H1 (cell line): ENCODE measurements at regions of chr1 and their contacts with region 1.

Region 1: GRCh38 chr1:153990468-153991150 is at the start of gene RPS27:
- DNase-seq: peak; percentile 86 to 93
- H3K4me3 ChIP-seq: peak within 1 kb of the TSS; percentile 78 to 95 (median 87)
- H3K27ac ChIP-seq: peak within 1 kb of the TSS; percentile 95
- H3K4me1 ChIP-seq: peaks cover 0 to 8% (median 3%) of the 10 kb centered on the region in 4 experiments; a peak in 4 of 7 replicates
- H3K27me3 ChIP-seq: no peaks in the 10 kb centered on the region
- CTCF ChIP-seq: no peak
- EP300 ChIP-seq: no peak
- POLR2A ChIP-seq: peak; percentile 100
- RAD21 ChIP-seq: no peak
- total RNA-seq, gene RPS27: 1,810 and 1,941 TPM in 2 replicates

Region 2: GRCh38 chr1:153643100-153643499 is 347.5 kb before region 1 on chr1:
- CTCF ChIA-PET with region 1: no interaction called
- POLR2A ChIA-PET with region 1: no interaction called
- DNase-seq: no peak
- H3K4me3 ChIP-seq: no peak overlapping the region
- H3K27ac ChIP-seq: no peak overlapping the region
- H3K4me1 ChIP-seq: peaks cover 0 to 3% (median 0%) of the 10 kb centered on the region in 4 experiments; a peak in 1 of 7 replicates
- H3K27me3 ChIP-seq: no peaks in the 10 kb centered on the region
- CTCF ChIP-seq: no peak
- EP300 ChIP-seq: no peak
- POLR2A ChIP-seq: no peak
- RAD21 ChIP-seq: no peak

Region 3: GRCh38 chr1:153775458-153776327 is 214.9 kb before region 1 on chr1:
- CTCF ChIA-PET with region 1: interaction called, 5 read pairs
- POLR2A ChIA-PET with region 1: interaction called, 53 read pairs
- DNase-seq: peak; percentile 70 to 92
- H3K4me3 ChIP-seq: peak overlapping the region; percentile 66 to 86 (median 83)
- H3K27ac ChIP-seq: peak overlapping the region; percentile 82
- H3K4me1 ChIP-seq: peaks cover 0 to 17% (median 11%) of the 10 kb centered on the region in 4 experiments; a peak in 6 of 7 replicates
- H3K27me3 ChIP-seq: no peaks in the 10 kb centered on the region; a peak in 1 of 7 replicates
- CTCF ChIP-seq: no peak; a peak in 1 of 4 replicates
- EP300 ChIP-seq: 0 out of 3 replicates have a peak, but pooled peaks of 1 of the 2 experiments have one; percentile 51
- POLR2A ChIP-seq: peak; percentile 70 to 93
- RAD21 ChIP-seq: peak in 1 of 2 experiments; percentile 2; a peak in 1 of 4 replicates

Region 4: GRCh38 chr1:153816283-153816889 is 174.2 kb before region 1 on chr1:
- CTCF ChIA-PET with region 1: interaction called, 6 read pairs
- POLR2A ChIA-PET with region 1: interaction called, 14 read pairs
- DNase-seq: no peak
- H3K4me3 ChIP-seq: no peak overlapping the region
- H3K27ac ChIP-seq: no peak overlapping the region
- H3K4me1 ChIP-seq: no peaks in the 10 kb centered on the region
- H3K27me3 ChIP-seq: no peaks in the 10 kb centered on the region
- CTCF ChIP-seq: no peak
- EP300 ChIP-seq: no peak
- POLR2A ChIP-seq: no peak
- RAD21 ChIP-seq: no peak

Region 5: GRCh38 chr1:153946622-153947241 is 43.9 kb before region 1 on chr1 and contains the start of gene DENND4B:
- CTCF ChIA-PET with region 1: interaction called, 10 read pairs
- POLR2A ChIA-PET with region 1: interaction called, 70 read pairs
- DNase-seq: peak in 1 of 2 experiments; percentile 93
- H3K4me3 ChIP-seq: peak within 1 kb of the TSS; percentile 79 to 87 (median 80)
- H3K27ac ChIP-seq: peak within 1 kb of the TSS; percentile 55; the same call in 1 of the 2 replicates
- H3K4me1 ChIP-seq: peaks cover 0 to 5% (median 2%) of the 10 kb centered on the region in 4 experiments; a peak in 2 of 7 replicates
- H3K27me3 ChIP-seq: no peaks in the 10 kb centered on the region
- CTCF ChIP-seq: peak; percentile 90 to 94 (median 91)
- EP300 ChIP-seq: peak in 1 of 2 experiments; percentile 50; a peak in 1 of 3 replicates
- POLR2A ChIP-seq: no peak
- RAD21 ChIP-seq: peak; percentile 61 to 71
- total RNA-seq, gene DENND4B: 61.1 and 62.8 TPM in 2 replicates

Region 6: GRCh38 chr1:154006136-154006535 is 15.5 kb after region 1 on chr1:
- CTCF ChIA-PET with region 1: interaction called, 3 read pairs
- POLR2A ChIA-PET with region 1: interaction called, 137 read pairs
- DNase-seq: no peak
- H3K4me3 ChIP-seq: no peak overlapping the region
- H3K27ac ChIP-seq: no peak overlapping the region
- H3K4me1 ChIP-seq: no peaks in the 10 kb centered on the region
- H3K27me3 ChIP-seq: no peaks in the 10 kb centered on the region
- CTCF ChIP-seq: no peak
- EP300 ChIP-seq: no peak
- POLR2A ChIP-seq: no peak
- RAD21 ChIP-seq: no peak

Region 7: DNA sequence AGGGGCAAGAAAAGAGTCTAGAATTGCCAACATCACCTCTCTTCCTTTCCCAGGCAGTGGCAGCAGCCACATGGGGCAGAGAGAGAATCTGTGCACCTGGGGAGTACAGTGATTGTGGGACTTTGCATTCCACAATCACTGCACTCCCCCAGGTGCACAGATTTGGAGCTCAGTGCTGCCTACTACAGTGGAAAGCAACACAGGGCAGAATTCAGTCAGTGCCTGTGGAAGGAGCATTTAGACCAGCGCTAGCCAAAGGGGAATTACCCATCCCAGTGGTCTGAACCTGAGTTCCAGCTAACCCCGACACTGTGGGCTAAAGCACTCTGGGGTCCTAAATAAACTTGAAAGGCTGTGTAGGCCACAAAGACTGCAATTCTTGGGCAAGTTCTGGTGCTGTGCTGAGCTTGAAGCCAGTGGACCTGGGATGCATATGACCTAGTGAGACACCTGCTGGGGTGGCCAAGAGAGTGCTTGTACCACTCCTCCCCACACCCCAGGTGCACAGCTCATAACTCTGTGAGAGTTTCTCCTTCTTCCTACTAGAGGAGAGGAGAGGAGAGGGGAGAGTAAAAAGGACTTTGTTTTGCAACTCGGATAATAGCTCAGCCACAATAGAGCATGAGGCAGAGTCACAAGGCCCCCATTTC is 113.9 kb after region 1 on chr1:
- CTCF ChIA-PET with region 1: no interaction called
- POLR2A ChIA-PET with region 1: interaction called, 13 read pairs
- DNase-seq: peak in 1 of 2 experiments; percentile 49
- H3K4me3 ChIP-seq: no peak overlapping the region
- H3K27ac ChIP-seq: no peak overlapping the region
- H3K4me1 ChIP-seq: peaks cover 0 to 1% (median 0%) of the 10 kb centered on the region in 4 experiments; a peak in 1 of 7 replicates
- H3K27me3 ChIP-seq: no peaks in the 10 kb centered on the region
- CTCF ChIP-seq: peak; percentile 34 to 53 (median 51)
- EP300 ChIP-seq: no peak
- POLR2A ChIP-seq: no peak
- RAD21 ChIP-seq: peak; percentile 14 to 38; a peak in 3 of 4 replicates

Region 8: GRCh38 chr1:154295408-154296235 is 305.0 kb after region 1 on chr1:
- CTCF ChIA-PET with region 1: no interaction called
- POLR2A ChIA-PET with region 1: no interaction called
- DNase-seq: no peak
- H3K4me3 ChIP-seq: no peak overlapping the region
- H3K27ac ChIP-seq: no peak overlapping the region
- H3K4me1 ChIP-seq: no peaks in the 10 kb centered on the region
- H3K27me3 ChIP-seq: no peaks in the 10 kb centered on the region
- CTCF ChIP-seq: no peak
- EP300 ChIP-seq: no peak
- POLR2A ChIP-seq: no peak
- RAD21 ChIP-seq: no peak